ENCODE measurements at regions of chr11 and their contacts with region 1.

Region 1: GRCh38 chr11:82867495-82868082 is 32.6 kb downstream of the PRCP start:
- DNase-seq: peak; percentile 48
- H3K4me3 ChIP-seq: no peak overlapping the region; the same call in 1 of the 2 replicates
- H3K27ac ChIP-seq: no peak overlapping the region
- H3K27me3 ChIP-seq: no peaks in the 10 kb centered on the region
- CTCF ChIP-seq: peak; percentile 76

Region 2: GRCh38 chr11:82718307-82718706 is 149.3 kb before region 1 on chr11:
- CTCF ChIA-PET with region 1: interaction called, 20 read pairs
- POLR2A ChIA-PET with region 1: no interaction called
- DNase-seq: peak; percentile 20
- H3K4me3 ChIP-seq: no peak overlapping the region
- H3K27ac ChIP-seq: no peak overlapping the region
- H3K27me3 ChIP-seq: peaks cover 4% of the 10 kb centered on the region
- CTCF ChIP-seq: peak; percentile 83

Region 3: DNA sequence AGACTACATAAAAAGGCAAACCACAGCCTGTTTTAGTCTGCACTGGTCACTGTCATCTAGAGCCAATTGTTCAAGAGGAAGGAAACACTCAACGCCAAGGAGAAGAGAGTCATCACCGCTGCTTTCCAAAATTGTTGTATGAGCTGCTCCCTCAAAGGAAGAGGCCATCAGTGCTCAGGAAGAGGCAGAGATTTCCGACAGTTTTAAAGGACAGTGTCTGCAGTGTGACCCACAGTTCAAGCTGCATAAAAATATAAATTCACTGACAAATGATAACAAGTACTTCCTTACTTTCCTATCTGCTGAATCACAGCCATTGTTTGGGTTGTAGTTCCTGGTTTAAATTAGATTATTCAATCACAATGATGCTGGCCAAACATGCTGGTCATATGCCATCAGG is 16.3 kb after region 1 on chr11:
- CTCF ChIA-PET with region 1: interaction called, 45 read pairs
- POLR2A ChIA-PET with region 1: no interaction called
- DNase-seq: no peak
- H3K4me3 ChIP-seq: no peak overlapping the region
- H3K27ac ChIP-seq: no peak overlapping the region
- H3K27me3 ChIP-seq: no peaks in the 10 kb centered on the region
- CTCF ChIP-seq: no peak

Region 4: DNA sequence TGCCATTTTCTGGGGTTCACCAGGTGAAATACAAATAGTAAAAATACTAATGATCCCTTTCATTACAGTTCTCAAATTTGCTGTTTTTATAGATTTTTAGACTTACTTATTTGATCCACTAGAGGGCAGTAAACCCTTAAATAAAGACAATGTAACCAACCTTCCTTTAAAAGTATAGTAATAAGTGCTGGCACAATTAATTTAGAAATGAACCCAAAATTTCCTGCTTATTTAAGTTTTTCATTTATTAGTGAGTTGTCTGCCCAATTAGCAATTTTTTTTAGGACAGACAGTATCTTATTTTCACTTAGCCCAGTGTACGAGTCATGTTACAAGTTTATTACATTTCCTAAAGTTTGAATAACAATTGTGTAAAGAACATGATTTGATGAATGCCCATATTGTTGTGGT is 38.7 kb after region 1 on chr11:
- CTCF ChIA-PET with region 1: interaction called, 46 read pairs
- POLR2A ChIA-PET with region 1: no interaction called
- DNase-seq: no peak
- H3K4me3 ChIP-seq: no peak overlapping the region
- H3K27ac ChIP-seq: no peak overlapping the region
- H3K27me3 ChIP-seq: no peaks in the 10 kb centered on the region
- CTCF ChIP-seq: peak; percentile 45; the same call in 1 of the 2 replicates

Region 5: DNA sequence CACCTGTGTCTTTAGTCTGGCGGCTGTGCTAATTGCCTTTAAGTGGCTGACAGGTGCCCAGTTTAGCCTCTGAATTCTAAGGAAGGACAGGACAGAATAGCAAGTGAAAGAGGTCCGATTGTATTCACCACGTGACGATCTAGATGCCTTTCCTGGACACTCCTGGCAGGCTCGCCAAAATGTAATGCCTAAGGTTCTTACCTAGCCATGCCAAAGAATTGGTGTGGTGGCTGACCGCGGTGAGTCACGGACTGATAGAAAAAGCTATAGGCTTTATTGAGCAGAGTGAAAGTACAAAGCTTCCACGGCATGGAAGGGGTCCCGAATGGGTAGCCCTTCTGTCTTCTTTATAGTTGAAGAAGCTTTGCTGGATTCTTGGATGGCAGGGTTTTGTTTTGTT is 352.7 kb after region 1 on chr11:
- CTCF ChIA-PET with region 1: interaction called, 11 read pairs
- POLR2A ChIA-PET with region 1: no interaction called
- DNase-seq: no peak
- H3K4me3 ChIP-seq: no peak overlapping the region
- H3K27ac ChIP-seq: no peak overlapping the region
- H3K27me3 ChIP-seq: no peaks in the 10 kb centered on the region
- CTCF ChIP-seq: no peak

Region 6: DNA sequence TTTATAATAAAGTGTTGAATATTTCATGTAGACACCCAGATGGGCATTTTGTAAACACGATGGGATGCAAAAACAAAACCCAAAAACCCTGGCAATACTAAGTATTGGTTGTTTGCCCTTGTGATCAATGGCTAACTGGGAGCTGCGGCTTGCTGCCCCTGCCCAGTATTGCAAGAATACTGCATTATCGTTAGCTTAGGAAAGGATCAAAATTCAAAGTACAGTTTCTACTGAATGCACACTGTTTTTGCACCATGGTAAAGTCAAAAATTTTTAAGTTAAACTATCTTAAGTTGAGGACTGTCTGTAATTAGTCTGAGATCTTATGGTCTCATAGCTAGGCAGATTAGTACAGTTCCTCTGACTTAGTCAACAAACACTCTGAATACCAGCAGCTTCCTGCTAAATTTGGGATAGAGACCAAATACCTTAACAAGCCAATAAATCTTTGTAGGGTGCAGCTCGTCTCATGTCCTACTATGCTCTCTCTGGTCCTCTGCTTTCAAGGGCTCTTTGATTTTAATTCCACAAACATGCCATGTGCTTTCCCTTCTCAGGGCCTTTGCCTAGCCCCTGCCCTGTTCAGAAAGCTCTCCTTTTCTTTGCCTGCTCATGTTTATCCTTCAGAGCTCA is 414.6 kb after region 1 on chr11:
- CTCF ChIA-PET with region 1: interaction called, 13 read pairs
- POLR2A ChIA-PET with region 1: no interaction called
- DNase-seq: no peak
- H3K4me3 ChIP-seq: no peak overlapping the region
- H3K27ac ChIP-seq: no peak overlapping the region
- H3K27me3 ChIP-seq: no peaks in the 10 kb centered on the region
- CTCF ChIP-seq: no peak